Thyroid gland (tissue), 4 donors: ENCODE measurements at regions of chr11 and their contacts with region 1.

Region 1: DNA sequence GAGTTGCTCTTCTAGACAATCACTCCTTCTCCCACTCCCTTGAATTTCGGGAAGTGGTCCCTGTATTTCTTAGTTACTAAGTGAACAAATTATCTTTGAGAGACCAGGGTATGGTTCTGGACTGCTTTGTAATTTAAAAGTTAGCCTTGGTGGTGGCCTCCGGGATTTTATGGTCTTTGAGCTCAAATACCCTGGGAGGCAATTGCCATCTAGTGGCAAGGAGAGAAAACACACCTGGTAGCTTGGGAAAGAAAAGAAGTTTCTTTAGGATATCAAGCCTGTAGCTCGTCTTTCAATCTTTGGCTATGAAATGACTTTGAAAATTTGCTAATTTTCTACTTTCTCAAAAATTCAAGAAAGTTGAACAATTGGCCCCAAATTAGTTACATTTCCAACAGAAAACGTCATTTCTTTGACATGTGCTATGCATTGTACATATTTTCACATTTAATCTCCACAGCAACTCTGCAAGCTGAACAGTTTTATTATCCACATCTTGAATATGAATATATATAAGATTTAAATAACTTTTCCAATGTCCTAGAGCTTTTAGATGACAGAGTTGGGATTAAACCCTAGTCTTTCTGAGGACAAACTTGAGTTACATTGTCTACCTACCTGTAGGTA is 39.1 kb downstream of the MMP27 start:
- DNase-seq: peak; percentile 10 to 13
- H3K4me3 ChIP-seq: no peak overlapping the region
- H3K27ac ChIP-seq: no peak overlapping the region
- H3K4me1 ChIP-seq: no peaks in the 10 kb centered on the region
- H3K27me3 ChIP-seq: no peaks in the 10 kb centered on the region
- CTCF ChIP-seq: peak; percentile 48 to 77 (median 74)
- POLR2A ChIP-seq: no peak

Region 2: DNA sequence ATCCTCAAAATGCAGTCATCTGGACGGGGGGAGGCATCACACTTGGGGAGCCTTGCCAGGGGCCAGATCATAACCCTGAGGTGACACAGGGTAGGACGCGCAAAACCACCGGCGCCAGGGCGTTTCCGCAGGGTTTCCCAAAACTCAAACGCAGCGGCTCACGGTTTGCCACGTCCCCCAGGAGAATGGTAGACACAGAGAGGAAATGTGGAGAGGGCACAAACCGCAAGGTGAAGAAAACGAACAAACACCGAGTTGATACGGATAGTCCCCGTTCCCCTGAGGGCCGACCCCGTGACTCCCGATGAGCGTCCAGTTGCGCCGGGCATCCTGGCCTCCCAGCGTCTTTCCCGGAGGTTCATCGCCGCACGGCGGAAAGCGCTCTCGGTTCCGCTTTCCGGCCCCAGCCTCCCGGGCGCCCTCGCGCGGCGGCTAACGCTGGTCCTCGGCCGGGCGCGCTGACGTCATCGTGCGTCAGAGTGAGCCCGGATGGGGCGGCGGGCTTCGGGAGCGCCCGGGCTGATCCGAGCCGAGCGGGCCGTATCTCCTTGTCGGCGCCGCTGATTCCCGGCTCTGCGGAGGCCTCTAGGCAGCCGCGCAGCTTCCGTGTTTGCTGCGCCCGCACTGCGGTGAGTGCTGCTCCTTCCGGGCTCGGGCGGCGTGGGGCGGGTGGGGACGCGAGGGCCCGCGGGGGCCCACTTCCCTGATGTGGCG is 319.5 kb before region 1 on chr11 and contains the start of gene BIRC2:
- intact Hi-C with region 1: loop called (anchors 10 kb)
- DNase-seq: peak; percentile 93 to 96
- H3K4me3 ChIP-seq: peak within 1 kb of the TSS; percentile 21 to 76 (median 64)
- H3K27ac ChIP-seq: peak within 1 kb of the TSS; percentile 99
- H3K4me1 ChIP-seq: peaks cover 12 to 20% of the 10 kb centered on the region in 2 donors
- H3K27me3 ChIP-seq: no peaks in the 10 kb centered on the region
- CTCF ChIP-seq: peak; percentile 14 to 94 (median 75)
- POLR2A ChIP-seq: peak; percentile 6 to 96
- total RNA-seq, gene BIRC2: 43.9 to 152 (median 72.9) TPM

Region 3: GRCh38 chr11:102810945-102811660 is 144.7 kb after region 1 on chr11:
- intact Hi-C with region 1: no loop called
- DNase-seq: no peak
- H3K4me3 ChIP-seq: no peak overlapping the region
- H3K27ac ChIP-seq: no peak overlapping the region
- H3K4me1 ChIP-seq: no peaks in the 10 kb centered on the region
- H3K27me3 ChIP-seq: no peaks in the 10 kb centered on the region
- CTCF ChIP-seq: no peak
- POLR2A ChIP-seq: no peak